ENCODE measurements at regions of chr20 and their contacts with region 1.

Region 1: GRCh38 chr20:62900052-62900691 is 26.1 kb downstream of the DIDO1 start:
- DNase-seq: peak; percentile 82
- ATAC-seq: peak; percentile 96
- H3K4me3 ChIP-seq: no peak overlapping the region
- H3K4me3 Mint-ChIP-seq: peak overlapping the region; percentile 41
- H3K27ac ChIP-seq: no peak overlapping the region
- H3K27ac Mint-ChIP-seq: peak overlapping the region; percentile 90
- H3K4me1 ChIP-seq: peaks cover 12 to 20% of the 10 kb centered on the region in 2 donors
- H3K4me1 Mint-ChIP-seq: peaks cover 30% of the 10 kb centered on the region
- H3K27me3 ChIP-seq: no peaks in the 10 kb centered on the region
- H3K27me3 Mint-ChIP-seq: no peaks in the 10 kb centered on the region
- CTCF ChIP-seq: peak; percentile 89

Region 2: DNA sequence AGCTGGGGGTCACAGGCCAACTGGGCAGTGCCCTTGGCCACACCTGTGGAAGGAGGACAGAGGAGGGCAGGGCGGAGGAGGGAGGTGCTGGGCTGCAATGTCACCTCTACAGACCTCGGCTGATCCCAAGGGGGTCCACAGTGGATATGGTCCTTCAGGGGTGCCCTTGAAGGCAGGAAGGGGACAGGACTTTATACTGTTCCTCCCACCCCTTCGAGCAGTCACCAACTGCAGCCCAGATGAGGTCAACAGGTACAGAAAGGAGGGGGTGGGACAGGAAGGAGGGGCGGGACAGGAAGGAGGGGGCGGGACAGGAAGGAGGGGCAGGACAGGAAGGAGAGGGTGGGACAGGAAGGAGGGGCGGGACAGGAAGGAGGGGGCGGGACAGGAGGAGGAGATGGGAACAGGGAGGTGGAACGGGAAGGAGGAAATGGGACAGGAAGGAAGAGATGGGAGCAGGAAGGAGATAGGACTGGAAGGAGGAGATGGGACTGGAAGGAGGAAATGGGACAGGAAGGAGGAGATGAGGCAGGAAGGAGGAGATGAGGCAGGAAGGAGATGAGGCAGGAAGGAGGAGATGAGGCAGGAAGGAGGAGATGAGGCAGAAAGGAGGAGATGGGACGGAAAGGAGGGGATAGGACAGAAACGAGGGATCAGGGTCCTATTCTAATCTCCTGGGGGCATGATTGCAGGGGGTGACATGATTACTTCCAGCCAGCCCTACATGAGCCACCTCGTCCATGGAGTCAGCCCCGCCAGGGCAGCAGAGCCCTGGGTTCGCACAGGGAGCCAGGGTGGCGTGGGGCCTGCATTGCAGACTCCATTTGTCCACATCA is 123.3 kb before region 1 on chr20:
- CTCF ChIA-PET with region 1: no interaction called
- POLR2A ChIA-PET with region 1: no interaction called
- intact Hi-C with region 1: no loop called
- DNase-seq: peak; percentile 40
- ATAC-seq: peak; percentile 82
- H3K4me3 ChIP-seq: peak overlapping the region in 2 of 5 experiments; percentile 17 to 19
- H3K4me3 Mint-ChIP-seq: peak overlapping the region; percentile 50
- H3K27ac ChIP-seq: peak overlapping the region; percentile 65 to 69
- H3K27ac Mint-ChIP-seq: peak overlapping the region; percentile 74
- H3K4me1 ChIP-seq: peaks cover 17 to 25% of the 10 kb centered on the region in 2 donors
- H3K4me1 Mint-ChIP-seq: peaks cover 25% of the 10 kb centered on the region
- H3K27me3 ChIP-seq: no peaks in the 10 kb centered on the region
- H3K27me3 Mint-ChIP-seq: no peaks in the 10 kb centered on the region
- CTCF ChIP-seq: no peak

Region 3: DNA sequence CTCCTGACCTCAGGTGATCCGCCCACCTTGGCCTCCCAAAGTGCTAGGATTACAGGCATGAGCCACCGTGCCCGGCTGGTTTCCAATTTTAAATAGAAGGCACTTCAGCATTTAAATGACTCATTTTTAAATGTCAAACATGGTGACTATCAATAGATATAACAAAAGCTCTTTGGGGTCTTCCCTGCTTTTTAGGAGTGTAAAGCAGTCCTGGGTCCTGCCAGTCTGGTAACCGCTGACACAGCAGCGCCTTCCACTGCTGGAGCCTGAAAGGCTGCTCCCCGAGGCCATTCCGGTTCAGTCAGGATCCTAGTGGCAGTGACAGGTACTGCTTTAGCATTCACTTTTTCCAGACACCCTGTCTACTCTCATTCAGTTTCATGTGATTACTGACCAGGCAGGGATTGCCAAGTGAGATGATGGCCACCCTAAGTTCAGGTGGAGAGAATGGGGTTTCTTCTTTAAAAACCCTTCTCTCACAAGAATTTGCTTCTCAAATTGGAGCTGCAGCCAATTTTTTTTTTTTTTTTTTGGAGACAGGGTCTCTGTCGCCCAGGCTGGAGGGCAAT is 21.0 kb after region 1 on chr20:
- CTCF ChIA-PET with region 1: interaction called, 18 read pairs
- POLR2A ChIA-PET with region 1: no interaction called
- intact Hi-C with region 1: loop called (anchors 2 kb)
- DNase-seq: peak; percentile 61
- ATAC-seq: no peak
- H3K4me3 ChIP-seq: no peak overlapping the region
- H3K4me3 Mint-ChIP-seq: peak overlapping the region; percentile 73
- H3K27ac ChIP-seq: no peak overlapping the region
- H3K27ac Mint-ChIP-seq: no peak overlapping the region
- H3K4me1 ChIP-seq: peaks cover 80 to 82% of the 10 kb centered on the region in 2 donors
- H3K4me1 Mint-ChIP-seq: peaks cover 79% of the 10 kb centered on the region
- H3K27me3 ChIP-seq: no peaks in the 10 kb centered on the region
- H3K27me3 Mint-ChIP-seq: no peaks in the 10 kb centered on the region
- CTCF ChIP-seq: peak; percentile 61

Region 4: DNA sequence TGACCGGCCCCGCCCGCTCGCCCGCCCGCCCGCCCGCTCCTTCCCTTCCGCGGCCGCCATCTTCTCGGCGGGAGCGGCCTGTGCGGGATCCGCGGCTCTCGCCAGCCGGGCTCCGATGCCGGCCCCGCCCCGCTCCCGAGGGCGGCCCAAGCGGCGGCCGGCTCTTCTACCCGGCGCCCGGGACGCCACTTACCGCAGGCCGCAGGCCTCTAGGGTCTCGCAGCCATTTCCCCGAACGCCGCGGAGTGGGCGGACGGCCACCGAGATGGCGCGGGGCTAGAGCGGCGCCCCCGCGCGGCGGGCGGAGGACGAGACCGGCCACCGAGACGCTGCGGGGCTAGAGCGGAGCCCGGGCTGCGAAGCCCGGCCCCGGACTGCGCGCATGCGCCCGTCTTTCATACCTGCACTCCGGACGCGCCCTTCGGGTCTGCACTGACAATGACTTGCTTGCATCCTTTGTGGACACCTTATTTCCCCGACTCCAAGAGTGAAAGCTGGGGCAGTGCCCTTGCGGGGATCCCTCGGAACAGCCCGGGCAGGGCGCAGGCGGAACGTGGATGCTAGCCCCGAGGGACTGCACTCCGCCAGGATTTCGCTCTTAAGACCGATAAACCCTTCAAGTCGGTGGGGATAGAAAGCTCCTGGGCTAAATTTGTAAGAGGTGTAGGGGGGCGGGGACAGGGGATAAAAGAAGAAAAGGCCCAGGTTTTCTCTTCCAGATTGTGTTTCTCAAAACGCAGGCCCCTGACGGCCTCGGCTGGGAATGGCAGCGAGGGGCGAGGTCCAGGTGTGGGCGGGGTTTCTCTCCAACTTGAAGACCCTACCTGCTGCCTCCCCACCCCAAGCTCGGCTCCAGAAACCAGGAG is 26.3 kb after region 1 on chr20 and contains the start of gene DIDO1:
- CTCF ChIA-PET with region 1: interaction called, 3 read pairs
- POLR2A ChIA-PET with region 1: no interaction called
- intact Hi-C with region 1: loop called (anchors 2 kb)
- DNase-seq: peak; percentile 94
- ATAC-seq: peak; percentile 89
- H3K4me3 ChIP-seq: peak within 1 kb of the TSS; percentile 86 to 99 (median 96)
- H3K4me3 Mint-ChIP-seq: peak within 1 kb of the TSS; percentile 95
- H3K27ac ChIP-seq: peak within 1 kb of the TSS; percentile 79 to 92
- H3K27ac Mint-ChIP-seq: peak within 1 kb of the TSS; percentile 94
- H3K4me1 ChIP-seq: peaks cover 55 to 73% of the 10 kb centered on the region in 2 donors
- H3K4me1 Mint-ChIP-seq: peaks cover 75% of the 10 kb centered on the region
- H3K27me3 ChIP-seq: no peaks in the 10 kb centered on the region
- H3K27me3 Mint-ChIP-seq: no peaks in the 10 kb centered on the region
- CTCF ChIP-seq: peak; percentile 75
- total RNA-seq, gene DIDO1: 124 and 128 TPM in 2 replicates

Region 5: DNA sequence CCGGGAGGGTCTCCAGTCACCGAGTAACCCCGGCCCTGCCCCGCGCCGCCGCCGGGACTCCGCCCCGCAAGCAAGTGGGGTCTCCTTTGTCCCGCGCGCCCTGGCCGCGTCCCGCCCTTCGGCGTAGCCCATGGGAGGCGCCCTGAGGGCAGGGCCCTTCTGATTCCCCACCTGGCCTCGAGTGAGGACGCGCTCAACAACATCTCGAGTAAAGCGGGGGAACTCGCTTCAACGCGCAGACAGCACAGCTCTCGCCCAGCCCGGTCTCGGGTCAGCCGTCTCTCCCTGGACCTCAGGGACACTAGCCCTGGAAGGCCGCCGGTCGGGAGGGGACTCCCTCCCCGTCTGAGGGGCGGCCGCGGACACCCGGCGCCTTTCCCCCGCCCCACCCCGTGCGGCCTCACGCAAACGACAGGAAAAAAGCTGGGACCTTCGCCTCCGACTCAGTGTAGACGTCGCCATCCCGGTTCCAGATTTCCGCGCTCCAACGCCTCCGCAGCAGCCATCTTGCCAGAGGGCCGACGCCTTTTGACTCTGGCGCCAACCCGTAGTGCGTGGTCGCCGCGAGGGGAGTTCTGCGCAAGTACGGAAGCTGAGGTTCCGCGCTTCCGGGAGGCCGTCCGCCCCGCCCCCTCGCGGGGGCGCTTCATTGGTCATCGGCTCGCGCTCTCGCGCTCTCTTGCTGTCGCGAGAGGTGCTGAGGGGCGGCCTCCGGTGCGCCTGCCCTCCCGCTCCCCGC is 37.4 kb after region 1 on chr20:
- CTCF ChIA-PET with region 1: interaction called, 7 read pairs
- POLR2A ChIA-PET with region 1: no interaction called
- intact Hi-C with region 1: loop called (anchors 1 kb)
- DNase-seq: peak; percentile 97
- ATAC-seq: peak; percentile 90
- H3K4me3 ChIP-seq: peak overlapping the region; percentile 53 to 100 (median 81)
- H3K4me3 Mint-ChIP-seq: peak overlapping the region; percentile 89
- H3K27ac ChIP-seq: peak overlapping the region; percentile 91 to 93
- H3K27ac Mint-ChIP-seq: peak overlapping the region; percentile 92
- H3K4me1 ChIP-seq: peaks cover 26 to 42% of the 10 kb centered on the region in 2 donors
- H3K4me1 Mint-ChIP-seq: peaks cover 36% of the 10 kb centered on the region
- H3K27me3 ChIP-seq: no peaks in the 10 kb centered on the region
- H3K27me3 Mint-ChIP-seq: no peaks in the 10 kb centered on the region
- CTCF ChIP-seq: no peak

Region 6: DNA sequence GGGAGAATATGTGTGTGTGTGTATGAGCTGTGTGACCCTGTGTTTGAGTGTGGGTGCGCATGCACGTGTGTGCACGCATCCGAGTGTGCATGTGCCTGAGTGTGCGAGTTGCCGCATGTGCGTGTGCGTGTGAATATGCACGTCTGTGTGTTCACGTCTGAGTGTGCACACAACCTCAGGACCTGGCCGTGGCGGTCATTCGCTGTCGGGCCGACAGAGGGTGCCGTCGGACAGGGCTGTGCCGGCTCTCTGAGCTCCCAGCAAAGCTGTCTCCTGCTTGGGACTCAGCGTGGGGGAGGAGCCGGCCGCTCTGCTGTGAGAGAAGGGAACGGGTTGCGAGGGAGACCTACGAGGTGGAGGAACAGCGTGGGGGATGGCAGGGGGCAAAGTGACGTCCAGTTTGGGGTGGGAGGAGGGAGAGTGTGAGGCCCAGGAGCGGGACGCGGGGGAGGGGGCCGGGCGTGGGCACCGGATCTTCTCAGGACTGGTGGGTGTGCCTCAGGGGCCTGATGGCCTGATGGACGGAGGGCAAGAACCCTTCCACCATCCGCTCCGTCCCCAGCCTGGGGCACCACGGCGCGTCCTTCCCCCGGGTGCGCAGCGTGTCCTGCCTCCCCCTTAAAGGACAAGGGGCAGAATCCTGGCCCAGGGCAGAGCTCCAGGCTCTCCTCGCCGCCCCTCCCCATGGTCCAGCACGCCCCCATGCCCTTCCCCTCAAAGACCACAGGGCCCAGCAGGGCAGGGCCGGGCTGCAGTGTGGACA is 72.3 kb after region 1 on chr20:
- CTCF ChIA-PET with region 1: interaction called, 3 read pairs
- POLR2A ChIA-PET with region 1: interaction called, 3 read pairs
- intact Hi-C with region 1: loop called (anchors 1 kb)
- DNase-seq: peak; percentile 88
- ATAC-seq: peak; percentile 96
- H3K4me3 ChIP-seq: peak overlapping the region in 3 of 5 experiments; percentile 38 to 49 (median 45)
- H3K4me3 Mint-ChIP-seq: peak overlapping the region; percentile 82
- H3K27ac ChIP-seq: no peak overlapping the region
- H3K27ac Mint-ChIP-seq: peak overlapping the region; percentile 37
- H3K4me1 ChIP-seq: peaks cover 21 to 26% of the 10 kb centered on the region in 2 donors
- H3K4me1 Mint-ChIP-seq: peaks cover 32% of the 10 kb centered on the region
- H3K27me3 ChIP-seq: peaks cover 0 to 65% (median 28%) of the 10 kb centered on the region in 4 experiments
- H3K27me3 Mint-ChIP-seq: peaks cover 39% of the 10 kb centered on the region
- CTCF ChIP-seq: peak; percentile 85

Region 7: GRCh38 chr20:63009045-63009961 is 109.1 kb after region 1 on chr20:
- CTCF ChIA-PET with region 1: interaction called, 28 read pairs
- POLR2A ChIA-PET with region 1: no interaction called
- intact Hi-C with region 1: no loop called
- DNase-seq: peak; percentile 89
- ATAC-seq: peak; percentile 80
- H3K4me3 ChIP-seq: peak overlapping the region in 1 of 5 experiments; percentile 42
- H3K4me3 Mint-ChIP-seq: peak overlapping the region; percentile 86
- H3K27ac ChIP-seq: no peak overlapping the region
- H3K27ac Mint-ChIP-seq: peak overlapping the region; percentile 21
- H3K4me1 ChIP-seq: peaks cover 52 to 57% of the 10 kb centered on the region in 2 donors
- H3K4me1 Mint-ChIP-seq: peaks cover 21% of the 10 kb centered on the region
- H3K27me3 ChIP-seq: peaks cover 0 to 84% (median 51%) of the 10 kb centered on the region in 4 experiments
- H3K27me3 Mint-ChIP-seq: peaks cover 47% of the 10 kb centered on the region
- CTCF ChIP-seq: peak; percentile 95

Region 8: DNA sequence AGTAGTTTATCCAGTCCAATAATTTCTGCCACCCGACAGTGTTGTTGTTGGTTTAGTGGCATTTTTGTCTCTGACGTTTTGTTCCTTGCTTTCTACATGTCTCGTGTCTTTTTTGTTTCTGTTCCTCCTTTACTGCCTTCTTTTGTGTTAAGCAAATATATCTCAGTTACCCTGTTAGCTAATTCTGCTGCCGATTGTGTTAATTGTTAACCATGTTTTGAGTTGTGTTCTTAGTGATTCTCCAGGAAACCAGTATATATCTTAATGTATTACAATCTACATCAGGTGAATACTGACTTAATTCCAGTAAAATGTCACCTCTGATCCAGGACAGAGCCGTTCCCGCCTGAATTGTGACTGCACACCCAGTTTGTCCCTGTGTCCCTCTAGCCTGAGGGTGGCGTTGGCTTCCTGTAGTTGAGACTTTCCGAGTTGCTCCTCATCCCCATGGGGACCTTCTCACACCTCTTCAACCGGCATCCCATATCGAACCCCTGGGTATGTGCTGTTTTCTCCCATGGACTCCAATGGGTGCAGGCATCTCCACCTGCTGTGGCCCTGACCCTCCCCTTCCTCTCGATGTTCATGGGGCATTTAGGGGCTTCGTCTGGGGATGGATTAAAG is 142.4 kb after region 1 on chr20:
- CTCF ChIA-PET with region 1: no interaction called
- POLR2A ChIA-PET with region 1: no interaction called
- intact Hi-C with region 1: no loop called
- DNase-seq: no peak
- ATAC-seq: no peak
- H3K4me3 ChIP-seq: no peak overlapping the region
- H3K4me3 Mint-ChIP-seq: no peak overlapping the region
- H3K27ac ChIP-seq: no peak overlapping the region
- H3K27ac Mint-ChIP-seq: no peak overlapping the region
- H3K4me1 ChIP-seq: no peaks in the 10 kb centered on the region
- H3K4me1 Mint-ChIP-seq: no peaks in the 10 kb centered on the region
- H3K27me3 ChIP-seq: peaks cover 0 to 12% (median 4%) of the 10 kb centered on the region in 4 experiments
- H3K27me3 Mint-ChIP-seq: peaks cover 40% of the 10 kb centered on the region
- CTCF ChIP-seq: no peak